Activated B cell treated with CpG ODN at 0.5 μM for 24 hours (primary cell): ENCODE measurements at regions of chr15 and their contacts with region 1.

Region 1: DNA sequence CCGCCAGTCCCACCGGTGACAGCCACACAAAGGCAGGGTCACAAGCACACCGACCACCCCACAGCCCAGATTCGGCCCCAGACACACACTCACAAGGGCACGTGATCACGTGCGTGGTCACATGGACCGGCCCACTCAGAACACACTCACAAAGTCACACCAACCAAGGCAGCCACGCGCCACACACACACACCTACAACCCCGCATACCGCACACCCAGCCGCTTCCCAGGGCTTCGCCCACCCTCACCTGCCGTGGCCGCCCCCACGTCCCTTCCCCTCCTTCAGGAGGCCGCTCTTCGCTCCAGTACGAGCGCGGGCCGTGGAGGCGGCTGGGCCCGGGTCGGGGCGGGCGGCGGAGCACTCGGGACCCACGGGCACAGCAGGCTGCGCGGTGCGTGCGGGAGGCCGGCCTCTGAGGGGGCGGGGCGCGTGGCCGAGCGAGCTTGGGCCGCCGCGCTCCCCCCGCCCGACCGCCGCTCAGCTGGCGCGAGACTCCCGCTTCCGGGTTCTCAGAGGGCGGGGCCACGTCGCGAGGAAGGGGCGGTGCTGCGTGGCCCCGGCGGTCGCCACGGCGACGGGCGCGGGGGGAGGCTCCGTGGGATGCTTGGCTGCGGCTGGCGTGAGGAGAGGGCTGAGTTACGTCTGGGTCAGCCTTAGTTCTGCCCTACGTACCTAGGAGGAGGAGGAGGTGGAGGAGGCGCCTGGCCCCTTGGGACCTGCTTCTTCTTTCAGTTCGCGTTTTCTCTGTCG is at the start of gene SPG21:
- DNase-seq: peak; percentile 97
- ATAC-seq: peak; percentile 95
- H3K4me3 Mint-ChIP-seq: peak within 1 kb of the TSS; percentile 91
- H3K27ac Mint-ChIP-seq: peak within 1 kb of the TSS; percentile 86
- H3K4me1 Mint-ChIP-seq: peaks cover 48% of the 10 kb centered on the region
- H3K27me3 Mint-ChIP-seq: no peaks in the 10 kb centered on the region
- CTCF ChIP-seq: no peak
- total RNA-seq, gene SPG21: 74.7 and 75.7 TPM in 2 replicates

Region 2: GRCh38 chr15:64841258-64842095 is 148.1 kb before region 1 on chr15 and contains the start of gene PLEKHO2:
- CTCF ChIA-PET with region 1: no interaction called
- POLR2A ChIA-PET with region 1: interaction called, 3 read pairs
- intact Hi-C with region 1: loop called (anchors 5 kb)
- DNase-seq: peak; percentile 78
- ATAC-seq: peak; percentile 75
- H3K4me3 Mint-ChIP-seq: peak within 1 kb of the TSS; percentile 95
- H3K27ac Mint-ChIP-seq: peak within 1 kb of the TSS; percentile 75
- H3K4me1 Mint-ChIP-seq: peaks cover 53% of the 10 kb centered on the region
- H3K27me3 Mint-ChIP-seq: no peaks in the 10 kb centered on the region
- CTCF ChIP-seq: no peak
- total RNA-seq, gene PLEKHO2: 36.5 and 38.1 TPM in 2 replicates

Region 3: DNA sequence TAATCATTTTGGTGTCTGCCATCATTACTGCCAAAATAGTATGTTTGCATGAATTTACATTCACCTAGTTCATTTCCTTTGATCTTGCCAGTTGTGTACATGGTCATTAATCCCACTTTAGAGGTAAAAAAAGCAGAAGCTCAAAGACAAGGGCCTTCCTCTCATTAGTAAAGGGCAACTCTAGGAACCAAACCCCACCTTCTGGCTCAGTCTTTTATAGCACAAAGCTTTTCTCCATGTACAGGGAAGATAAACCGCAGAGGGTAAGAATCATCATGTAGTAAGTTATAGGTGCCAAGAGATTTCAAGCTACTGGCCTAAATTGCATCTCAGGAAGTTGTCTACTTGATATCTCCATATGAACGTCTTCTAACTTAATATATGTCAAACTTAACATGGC is 19.4 kb after region 1 on chr15:
- CTCF ChIA-PET with region 1: interaction called, 4 read pairs
- POLR2A ChIA-PET with region 1: interaction called, 7 read pairs
- intact Hi-C with region 1: loop called (anchors 2 kb)
- DNase-seq: no peak
- ATAC-seq: peak; percentile 60
- H3K4me3 Mint-ChIP-seq: no peak overlapping the region
- H3K27ac Mint-ChIP-seq: no peak overlapping the region
- H3K4me1 Mint-ChIP-seq: peaks cover 6% of the 10 kb centered on the region
- H3K27me3 Mint-ChIP-seq: no peaks in the 10 kb centered on the region
- CTCF ChIP-seq: no peak

Region 4: GRCh38 chr15:65286704-65287519 is 297.3 kb after region 1 on chr15 and contains the start of gene PARP16:
- CTCF ChIA-PET with region 1: no interaction called
- POLR2A ChIA-PET with region 1: interaction called, 10 read pairs
- intact Hi-C with region 1: loop called (anchors 5 kb)
- DNase-seq: peak; percentile 94
- ATAC-seq: peak; percentile 96
- H3K4me3 Mint-ChIP-seq: peak within 1 kb of the TSS; percentile 85
- H3K27ac Mint-ChIP-seq: peak within 1 kb of the TSS; percentile 90
- H3K4me1 Mint-ChIP-seq: peaks cover 27% of the 10 kb centered on the region
- H3K27me3 Mint-ChIP-seq: no peaks in the 10 kb centered on the region
- CTCF ChIP-seq: no peak
- total RNA-seq, gene PARP16: 11.2 and 11.5 TPM in 2 replicates

Region 5: DNA sequence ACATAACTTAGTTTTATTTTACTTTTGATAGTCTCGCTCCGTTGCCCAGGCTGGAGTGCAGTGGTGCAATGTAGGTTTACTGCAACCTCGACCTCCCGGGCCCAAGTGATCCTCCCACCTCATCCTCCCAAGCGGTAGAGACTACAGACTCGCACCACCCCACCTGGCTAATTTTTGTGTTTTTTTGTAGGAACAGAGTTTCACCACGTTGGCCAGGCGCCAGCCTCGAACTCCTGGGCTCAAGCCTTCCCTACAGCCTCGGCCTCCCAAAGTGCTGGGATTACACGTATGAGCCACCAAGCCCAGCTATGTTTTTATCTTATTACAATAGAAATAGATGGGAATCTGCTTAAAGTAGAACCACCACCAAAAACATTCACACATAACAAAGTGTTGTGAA is 309.1 kb after region 1 on chr15:
- CTCF ChIA-PET with region 1: no interaction called
- POLR2A ChIA-PET with region 1: no interaction called
- intact Hi-C with region 1: loop called (anchors 5 kb)
- DNase-seq: no peak
- ATAC-seq: no peak
- H3K4me3 Mint-ChIP-seq: no peak overlapping the region
- H3K27ac Mint-ChIP-seq: no peak overlapping the region
- H3K4me1 Mint-ChIP-seq: peaks cover 49% of the 10 kb centered on the region
- H3K27me3 Mint-ChIP-seq: no peaks in the 10 kb centered on the region
- CTCF ChIP-seq: no peak